ENCODE measurements at regions of chr2 and their contacts with region 1.

Region 1: GRCh38 chr2:212548450-212548819 is 9.8 kb upstream of the ERBB4 start:
- DNase-seq: no peak
- H3K4me3 ChIP-seq: no peak overlapping the region
- H3K27ac ChIP-seq: no peak overlapping the region
- H3K4me1 ChIP-seq: peaks cover 0 to 11% (median 3%) of the 10 kb centered on the region in 4 donors
- H3K27me3 ChIP-seq: no peaks in the 10 kb centered on the region
- CTCF ChIP-seq: peak; percentile 60 to 69

Region 2: GRCh38 chr2:211745295-211746097 is 802.9 kb before region 1 on chr2:
- intact Hi-C with region 1: loop called (anchors 2 kb)
- DNase-seq: no peak
- H3K4me3 ChIP-seq: no peak overlapping the region
- H3K27ac ChIP-seq: no peak overlapping the region
- H3K4me1 ChIP-seq: no peaks in the 10 kb centered on the region
- H3K27me3 ChIP-seq: no peaks in the 10 kb centered on the region
- CTCF ChIP-seq: peak; percentile 68 to 84

Region 3: DNA sequence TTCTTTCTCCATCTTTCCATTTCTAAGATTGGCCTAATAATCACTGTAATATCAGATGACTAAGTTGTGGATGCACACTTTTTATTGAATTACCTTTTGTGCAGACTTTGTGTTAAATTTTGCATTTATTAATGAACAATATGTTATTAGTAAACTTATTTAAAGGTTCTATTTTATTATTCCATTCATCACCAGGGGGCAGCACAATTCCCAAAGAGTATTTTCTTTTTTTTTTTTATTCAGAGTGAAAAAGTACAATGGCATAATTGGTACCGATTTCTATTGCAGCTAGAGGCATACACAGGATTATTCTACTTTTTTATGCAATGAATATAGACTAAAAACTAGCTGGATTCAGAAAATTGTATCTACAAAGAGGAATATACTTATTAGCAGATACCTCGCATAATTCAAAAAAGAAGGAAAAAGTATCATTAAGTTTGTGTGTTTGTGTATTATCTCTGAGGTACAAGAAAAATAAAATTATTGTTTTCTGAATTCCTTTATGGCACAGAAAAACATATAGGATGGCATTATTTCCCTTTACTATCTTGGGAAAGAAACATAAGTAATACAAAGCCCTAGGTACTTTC is 400.4 kb before region 1 on chr2:
- intact Hi-C with region 1: loop called (anchors 10 kb)
- DNase-seq: no peak
- H3K4me3 ChIP-seq: no peak overlapping the region
- H3K27ac ChIP-seq: no peak overlapping the region
- H3K4me1 ChIP-seq: peaks cover 0 to 25% (median 1%) of the 10 kb centered on the region in 4 donors
- H3K27me3 ChIP-seq: no peaks in the 10 kb centered on the region
- CTCF ChIP-seq: peak in 1 of 2 experiments; percentile 46

Region 4: DNA sequence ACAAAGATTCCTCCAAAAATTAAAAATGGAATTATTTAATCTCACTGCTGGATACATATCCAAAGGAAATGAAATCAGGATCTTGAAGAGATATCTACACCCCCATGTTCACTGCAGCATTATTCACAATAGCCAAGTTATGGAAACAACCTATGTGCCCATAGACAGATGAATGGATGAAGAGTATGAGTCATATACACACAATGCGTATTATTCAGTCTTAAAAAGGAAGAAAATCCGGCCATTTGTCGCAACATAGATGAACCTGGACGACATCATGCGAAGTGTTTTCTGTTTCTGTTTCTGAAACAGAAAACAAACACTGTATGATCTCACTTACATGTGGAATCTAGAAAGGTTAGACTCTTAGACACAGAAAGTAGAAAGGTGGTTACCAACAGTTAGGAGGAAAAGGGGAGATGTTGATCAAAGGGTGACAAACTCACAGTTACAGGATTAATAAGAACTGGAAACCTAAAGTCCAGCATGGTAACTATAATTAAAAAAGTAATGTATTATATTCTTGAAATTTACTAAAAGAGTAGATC is 78.0 kb after region 1 on chr2:
- intact Hi-C with region 1: no loop called
- DNase-seq: no peak
- H3K4me3 ChIP-seq: no peak overlapping the region
- H3K27ac ChIP-seq: no peak overlapping the region
- H3K4me1 ChIP-seq: no peaks in the 10 kb centered on the region
- H3K27me3 ChIP-seq: no peaks in the 10 kb centered on the region
- CTCF ChIP-seq: no peak